CD4-positive, alpha-beta memory T cell (primary cell): ENCODE measurements at regions of chr7 and their contacts with region 1.

Region 1: GRCh38 chr7:36979810-36980248 is 255.5 kb upstream of the AOAH start:
- DNase-seq: no peak
- H3K4me3 ChIP-seq: no peak overlapping the region
- H3K4me3 Mint-ChIP-seq: no peak overlapping the region
- H3K27ac ChIP-seq: no peak overlapping the region
- H3K27ac Mint-ChIP-seq: peak overlapping the region in 2 of 7 donors; percentile 13 to 67
- H3K4me1 ChIP-seq: no peaks in the 10 kb centered on the region
- H3K4me1 Mint-ChIP-seq: peaks cover 12 to 29% (median 18%) of the 10 kb centered on the region in 4 donors
- H3K27me3 ChIP-seq: no peaks in the 10 kb centered on the region
- H3K27me3 Mint-ChIP-seq: no peaks in the 10 kb centered on the region

Region 2: DNA sequence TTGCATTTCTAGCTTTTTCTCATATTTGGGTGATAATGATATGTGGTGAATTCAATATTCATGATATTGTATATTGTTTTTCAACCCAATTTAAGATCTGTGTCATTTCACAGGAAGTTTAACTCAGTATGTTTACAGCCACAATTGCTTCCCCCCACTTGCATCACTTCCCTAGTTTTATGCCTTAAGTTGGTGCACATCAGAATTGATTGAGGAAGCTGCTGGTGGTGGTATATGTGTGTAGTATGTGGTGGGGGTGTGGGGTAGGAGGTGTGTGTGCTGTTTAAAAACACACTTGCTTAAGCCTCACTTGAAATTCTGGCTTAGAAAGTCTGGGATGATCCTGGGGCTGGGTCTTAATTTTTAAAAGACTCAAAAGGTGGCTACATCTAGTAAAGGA is 10.5 kb before region 1 on chr7:
- CTCF ChIA-PET with region 1: interaction called, 33 read pairs
- POLR2A ChIA-PET with region 1: no interaction called
- intact Hi-C with region 1: no loop called
- DNase-seq: peak in 4 of 5 donors; percentile 4 to 47 (median 36)
- H3K4me3 ChIP-seq: no peak overlapping the region
- H3K4me3 Mint-ChIP-seq: peak overlapping the region in 7 of 8 donors; percentile 8 to 51 (median 46)
- H3K27ac ChIP-seq: no peak overlapping the region
- H3K27ac Mint-ChIP-seq: peak overlapping the region in 4 of 7 donors; percentile 65 to 86 (median 80)
- H3K4me1 ChIP-seq: peaks cover 41% of the 10 kb centered on the region
- H3K4me1 Mint-ChIP-seq: peaks cover 39 to 63% (median 50%) of the 10 kb centered on the region in 4 donors
- H3K27me3 ChIP-seq: no peaks in the 10 kb centered on the region
- H3K27me3 Mint-ChIP-seq: no peaks in the 10 kb centered on the region